OCI-LY7 (cell line): ENCODE measurements at regions of chr7 and their contacts with region 1.

Region 1: GRCh38 chr7:64562626-64563275 is at the start of gene ZNF680:
- DNase-seq: peak; percentile 97
- H3K4me3 ChIP-seq: peak within 1 kb of the TSS; percentile 77
- H3K27ac ChIP-seq: peak within 1 kb of the TSS; percentile 86
- H3K4me1 ChIP-seq: peaks cover 47% of the 10 kb centered on the region
- CTCF ChIP-seq: no peak
- total RNA-seq, gene ZNF680: 55.9 and 62.6 TPM in 2 replicates

Region 2: DNA sequence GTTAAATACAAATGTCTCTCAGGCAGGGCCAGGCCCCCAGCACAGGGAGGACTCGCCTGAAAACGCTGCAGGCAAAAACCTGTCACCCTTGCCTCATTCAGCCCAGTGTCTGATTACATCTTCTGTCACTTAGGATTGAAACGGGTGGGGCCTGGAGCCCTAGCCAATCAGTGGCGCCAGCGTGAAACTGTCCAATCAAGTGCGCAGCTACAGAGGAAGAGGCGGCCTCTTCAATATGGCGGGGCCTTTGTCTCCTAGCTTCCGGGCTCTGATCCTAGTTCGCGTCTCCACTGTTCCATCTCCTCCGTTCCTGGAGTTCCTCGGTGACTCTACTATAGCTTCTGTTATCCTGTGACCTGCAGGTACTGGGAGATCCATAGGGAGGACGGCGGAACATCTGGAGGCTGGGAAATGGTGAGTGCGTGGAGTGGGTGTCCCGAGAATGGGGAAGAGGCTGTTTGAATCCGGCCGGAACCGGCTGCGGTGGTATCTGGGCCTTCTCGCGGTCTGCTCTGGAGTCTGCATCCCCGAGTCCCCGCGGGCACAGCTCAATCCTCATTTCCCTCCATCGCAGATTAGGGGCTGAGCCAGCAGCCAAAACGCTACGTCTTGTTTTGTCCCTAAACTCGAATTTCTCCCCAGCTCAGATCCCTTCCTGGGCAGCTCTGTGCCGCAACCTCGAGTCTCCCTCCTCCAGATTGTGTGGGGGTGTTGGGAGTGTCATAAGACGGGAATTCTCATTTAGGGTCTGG is 248.8 kb before region 1 on chr7 and contains the start of gene ZNF736:
- CTCF ChIA-PET with region 1: interaction called, 3 read pairs
- POLR2A ChIA-PET with region 1: interaction called, 13 read pairs
- intact Hi-C with region 1: no loop called
- DNase-seq: peak; percentile 96
- H3K4me3 ChIP-seq: peak within 1 kb of the TSS; percentile 96
- H3K27ac ChIP-seq: peak within 1 kb of the TSS; percentile 72
- H3K4me1 ChIP-seq: peaks cover 47% of the 10 kb centered on the region
- CTCF ChIP-seq: no peak
- total RNA-seq, gene ZNF736: 68.4 and 72.3 TPM in 2 replicates

Region 3: DNA sequence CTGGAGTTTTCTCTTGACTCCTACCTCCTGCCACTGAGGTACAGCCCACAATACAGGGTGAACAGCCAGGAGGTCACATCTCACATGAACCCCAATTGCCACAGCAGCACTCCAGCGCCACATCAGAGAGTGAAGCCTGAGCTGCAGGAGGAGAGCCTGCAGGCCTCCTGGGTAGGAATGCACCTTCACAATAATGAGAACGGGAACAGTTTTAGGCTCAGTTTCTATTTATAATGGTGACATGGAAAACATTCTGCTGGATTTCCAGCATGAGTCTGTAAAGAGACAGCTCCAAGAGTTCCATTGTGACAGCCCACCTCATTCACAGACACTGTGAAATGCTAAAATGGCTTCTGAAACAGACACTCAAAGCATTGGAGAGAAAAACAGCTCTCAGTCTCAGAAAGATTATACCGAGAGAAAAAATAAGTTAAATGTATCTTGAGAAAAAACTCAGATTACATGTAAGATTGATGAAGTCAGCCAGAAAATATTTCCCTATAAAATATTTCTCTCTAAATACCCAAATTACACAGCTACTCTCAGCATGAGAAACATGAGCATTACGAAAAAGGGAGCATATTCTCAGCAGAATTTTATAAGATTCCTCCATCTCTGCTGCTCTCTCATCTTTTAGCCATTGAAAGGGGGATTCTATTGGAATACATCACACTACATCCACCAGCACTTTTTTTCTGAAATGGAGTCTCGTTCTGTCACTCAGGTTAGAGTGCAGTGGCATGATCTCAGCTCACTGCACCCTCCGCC is 11.2 kb before region 1 on chr7:
- CTCF ChIA-PET with region 1: no interaction called
- POLR2A ChIA-PET with region 1: interaction called, 11 read pairs
- intact Hi-C with region 1: no loop called
- DNase-seq: no peak
- H3K4me3 ChIP-seq: no peak overlapping the region
- H3K27ac ChIP-seq: no peak overlapping the region
- H3K4me1 ChIP-seq: peaks cover 9% of the 10 kb centered on the region
- CTCF ChIP-seq: no peak

Region 4: GRCh38 chr7:64581926-64582894 is 19.5 kb after region 1 on chr7:
- CTCF ChIA-PET with region 1: no interaction called
- POLR2A ChIA-PET with region 1: no interaction called
- intact Hi-C with region 1: no loop called
- DNase-seq: no peak
- H3K4me3 ChIP-seq: no peak overlapping the region
- H3K27ac ChIP-seq: no peak overlapping the region
- H3K4me1 ChIP-seq: no peaks in the 10 kb centered on the region
- CTCF ChIP-seq: no peak

Region 5: DNA sequence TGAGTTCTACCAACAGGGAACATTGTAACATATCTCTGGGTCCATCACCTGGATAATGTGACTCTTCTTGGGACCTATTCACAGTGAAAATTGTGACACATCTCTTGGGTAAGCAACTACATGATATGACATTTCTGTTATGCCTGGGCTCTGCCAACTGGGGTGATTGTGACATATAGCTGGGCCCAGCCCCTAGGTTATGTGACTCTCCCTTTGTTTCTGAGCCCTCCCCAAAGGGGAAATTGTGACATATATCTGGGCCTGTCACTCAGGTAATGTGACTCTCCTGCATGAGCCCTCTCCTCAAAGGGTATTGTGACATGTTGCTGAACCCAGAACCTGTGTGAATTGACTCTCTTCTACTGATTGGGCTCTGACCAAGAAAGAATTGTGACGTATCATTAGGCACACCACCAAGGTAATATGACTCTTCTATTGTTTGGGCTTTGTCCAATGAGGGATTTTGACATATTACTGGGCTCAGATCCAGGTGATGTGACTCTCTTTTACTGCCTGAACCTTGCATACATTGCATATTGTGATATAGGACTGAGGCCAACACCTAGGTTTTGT is 80.9 kb after region 1 on chr7:
- CTCF ChIA-PET with region 1: no interaction called
- POLR2A ChIA-PET with region 1: no interaction called
- intact Hi-C with region 1: no loop called
- DNase-seq: no peak
- H3K4me3 ChIP-seq: no peak overlapping the region
- H3K27ac ChIP-seq: no peak overlapping the region
- H3K4me1 ChIP-seq: no peaks in the 10 kb centered on the region
- CTCF ChIP-seq: no peak

Region 6: GRCh38 chr7:64686493-64687184 is 123.9 kb after region 1 on chr7:
- CTCF ChIA-PET with region 1: no interaction called
- POLR2A ChIA-PET with region 1: interaction called, 3 read pairs
- intact Hi-C with region 1: loop called (anchors 5 kb)
- DNase-seq: peak; percentile 93
- H3K4me3 ChIP-seq: peak overlapping the region; percentile 57
- H3K27ac ChIP-seq: peak overlapping the region; percentile 99
- H3K4me1 ChIP-seq: peaks cover 98% of the 10 kb centered on the region
- CTCF ChIP-seq: no peak

Region 7: DNA sequence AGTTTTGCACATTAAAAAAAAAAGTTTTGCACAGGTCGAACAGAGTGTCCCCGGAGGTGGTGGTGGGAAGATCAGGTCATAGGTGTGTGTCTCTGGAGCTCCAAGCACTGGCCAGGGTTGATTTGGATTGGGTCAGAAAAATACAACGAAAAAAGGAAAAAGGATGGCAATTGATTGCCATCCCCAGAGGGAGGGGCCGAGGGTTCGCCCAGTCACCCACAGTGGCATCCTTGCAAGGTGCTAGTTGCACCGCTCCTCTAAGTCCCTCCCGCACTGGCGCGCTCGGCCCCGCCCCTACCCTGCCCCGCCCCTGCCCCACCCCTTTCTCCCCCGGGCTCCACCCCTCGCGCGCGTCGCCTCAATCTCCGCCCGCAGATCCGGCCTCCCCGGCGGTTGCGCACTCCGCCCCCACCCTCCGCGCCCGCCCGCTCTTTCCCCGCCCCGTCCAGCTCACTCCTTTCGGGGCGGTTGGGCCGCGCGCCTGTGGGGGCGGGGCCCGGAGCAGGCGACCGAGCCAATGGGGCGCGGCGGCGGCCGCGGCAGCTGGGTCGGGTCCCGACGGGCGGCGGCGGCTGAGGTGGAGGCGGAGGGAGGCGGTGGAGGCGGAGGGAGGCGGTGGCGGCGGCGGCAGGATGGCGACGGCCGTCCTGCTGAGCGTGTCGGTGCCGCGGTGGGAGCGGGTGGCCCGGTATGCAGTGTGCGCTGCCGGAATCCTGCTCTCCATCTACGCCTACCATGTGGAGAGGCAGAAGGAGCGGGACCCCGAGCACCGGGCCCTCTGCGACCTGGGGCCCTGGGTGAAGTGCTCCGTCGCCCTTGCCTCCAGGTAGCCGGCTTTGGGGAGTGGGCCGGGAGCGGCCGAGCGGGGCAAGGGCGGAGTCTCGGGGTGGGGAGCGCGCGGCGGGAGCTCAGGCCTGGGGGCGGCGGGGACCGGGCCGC is 475.3 kb after region 1 on chr7:
- CTCF ChIA-PET with region 1: no interaction called
- POLR2A ChIA-PET with region 1: no interaction called
- intact Hi-C with region 1: loop called (anchors 10 kb)
- DNase-seq: peak; percentile 94
- H3K4me3 ChIP-seq: peak overlapping the region; percentile 86
- H3K27ac ChIP-seq: peak overlapping the region; percentile 54
- H3K4me1 ChIP-seq: peaks cover 26% of the 10 kb centered on the region
- CTCF ChIP-seq: peak; percentile 59